GM12878 (cell line): ENCODE measurements at regions of chr1 and their contacts with region 1.

Region 1: GRCh38 chr1:45884700-45885099 is 81.3 kb downstream of the MAST2 start:
- DNase-seq: no peak
- ATAC-seq: no peak
- H3K4me3 ChIP-seq: no peak overlapping the region
- H3K27ac ChIP-seq: no peak overlapping the region
- H3K4me1 ChIP-seq: 0 out of 2 replicates have a peak, but pooled peaks cover 3% of the 10 kb centered on the region
- H3K27me3 ChIP-seq: no peaks in the 10 kb centered on the region
- CTCF ChIP-seq: no peak
- EP300 ChIP-seq: no peak
- POLR2A ChIP-seq: no peak
- RAD21 ChIP-seq: no peak

Region 2: GRCh38 chr1:45621501-45621836 is 263.2 kb before region 1 on chr1:
- CTCF ChIA-PET with region 1: no interaction called
- POLR2A ChIA-PET with region 1: no interaction called
- RAD21 ChIA-PET with region 1: no interaction called
- SMC1A ChIA-PET with region 1: no interaction called
- in situ Hi-C with region 1: no loop called
- intact Hi-C with region 1: loop called (anchors 10 kb)
- DNase-seq: no peak
- ATAC-seq: peak; percentile 13; the same call in 2 of the 3 replicates
- H3K4me3 ChIP-seq: no peak overlapping the region
- H3K27ac ChIP-seq: no peak overlapping the region
- H3K4me1 ChIP-seq: no peaks in the 10 kb centered on the region
- H3K27me3 ChIP-seq: no peaks in the 10 kb centered on the region
- CTCF ChIP-seq: no peak
- EP300 ChIP-seq: no peak
- POLR2A ChIP-seq: peak; percentile 9; the same call in 1 of the 2 replicates
- RAD21 ChIP-seq: no peak